Astrocyte of the cerebellum (primary cell): ENCODE measurements at regions of chr6 and their contacts with region 1.

Region 1: DNA sequence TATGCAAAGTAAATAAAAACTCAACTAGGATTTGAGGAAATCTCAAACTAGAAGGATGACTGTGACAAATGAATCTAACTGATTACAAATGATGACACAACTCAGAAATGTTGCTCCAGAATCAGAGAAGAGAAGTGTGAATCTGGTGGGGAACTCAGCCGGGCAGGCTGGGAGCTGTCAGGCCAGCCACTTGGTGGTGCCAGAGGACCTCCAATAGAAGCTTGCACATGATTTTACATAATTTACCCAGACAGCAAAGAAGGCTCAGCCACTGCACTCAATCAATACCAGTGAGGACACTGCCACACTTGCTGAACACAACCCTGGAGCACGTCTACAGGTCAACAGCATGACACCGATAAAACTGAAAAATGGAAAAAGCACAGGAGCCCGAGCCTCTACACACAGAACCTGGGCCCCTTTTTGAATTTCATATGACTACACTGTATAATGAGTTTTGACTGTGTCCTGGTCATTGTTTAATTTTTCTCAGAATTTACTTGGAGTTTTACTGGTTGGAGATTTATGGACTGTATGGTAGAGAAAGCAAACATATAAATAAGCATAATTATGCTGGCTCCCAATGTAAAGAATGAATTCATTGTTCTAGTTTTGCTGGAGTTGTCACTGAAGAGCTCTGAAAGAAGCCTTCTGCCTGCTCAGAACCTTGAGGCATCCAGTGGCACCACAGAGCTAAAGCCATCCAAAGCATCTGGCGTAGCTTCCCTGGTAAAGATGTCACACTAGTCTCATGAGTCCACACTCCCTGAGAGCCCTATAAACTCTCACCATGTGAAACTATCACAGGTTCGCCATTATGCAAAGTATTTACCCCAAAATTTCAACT is 296.5 kb downstream of the THBS2 start:
- DNase-seq: peak; percentile 49
- H3K4me3 ChIP-seq: no peak overlapping the region
- CTCF ChIP-seq: peak; percentile 88

Region 2: DNA sequence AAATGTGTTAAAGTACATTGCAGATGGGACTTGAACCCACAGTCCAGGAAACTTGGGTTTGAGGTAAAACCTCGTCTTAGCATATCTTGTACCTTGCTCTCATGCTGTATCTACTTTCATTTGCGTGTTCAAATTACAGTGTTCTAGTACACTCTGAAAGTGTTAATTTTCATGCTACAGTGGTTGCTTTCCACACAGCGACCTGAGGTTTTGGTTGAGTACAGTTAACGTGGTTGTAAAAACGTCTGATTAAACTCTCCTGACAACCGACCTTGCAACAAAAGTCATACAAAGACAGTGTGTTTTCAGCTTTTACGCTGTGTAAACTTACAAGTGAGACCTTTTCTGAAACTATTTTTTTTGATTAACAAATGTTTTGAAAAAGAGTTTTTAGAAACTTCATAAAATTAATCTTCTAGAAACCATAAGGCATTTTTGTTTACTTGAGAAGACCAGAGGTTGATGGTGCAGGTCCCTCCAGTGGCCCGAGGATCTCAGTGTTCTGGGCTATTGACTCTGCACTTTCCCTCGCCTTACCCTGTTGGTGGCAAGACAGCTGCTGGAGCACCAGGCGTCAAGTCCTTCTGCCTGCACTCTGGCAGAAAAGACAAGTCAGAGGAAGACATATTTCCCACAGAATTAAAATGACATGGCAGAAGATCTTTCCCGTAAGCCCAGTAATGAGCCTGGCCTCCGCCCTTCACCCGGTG is 37.5 kb before region 1 on chr6:
- in situ Hi-C with region 1: loop called (anchors 5 kb)
- DNase-seq: no peak
- H3K4me3 ChIP-seq: no peak overlapping the region
- CTCF ChIP-seq: no peak

Region 3: GRCh38 chr6:169058634-169059033 is 101.5 kb after region 1 on chr6:
- in situ Hi-C with region 1: no loop called
- DNase-seq: no peak
- H3K4me3 ChIP-seq: no peak overlapping the region
- CTCF ChIP-seq: no peak